ENCODE measurements at regions of chr14 and their contacts with region 1.

Region 1: GRCh38 chr14:32252030-32252670 is 49.1 kb upstream of the RNU6-8 start:
- DNase-seq: peak; percentile 89
- ATAC-seq: peak; percentile 88
- H3K4me3 ChIP-seq: no peak overlapping the region
- H3K27ac ChIP-seq: no peak overlapping the region
- H3K4me1 ChIP-seq: no peaks in the 10 kb centered on the region
- H3K27me3 ChIP-seq: no peaks in the 10 kb centered on the region
- CTCF ChIP-seq: peak; percentile 99
- EP300 ChIP-seq: no peak; a peak in 1 of 4 replicates
- POLR2A ChIP-seq: no peak
- RAD21 ChIP-seq: peak; percentile 97

Region 2: DNA sequence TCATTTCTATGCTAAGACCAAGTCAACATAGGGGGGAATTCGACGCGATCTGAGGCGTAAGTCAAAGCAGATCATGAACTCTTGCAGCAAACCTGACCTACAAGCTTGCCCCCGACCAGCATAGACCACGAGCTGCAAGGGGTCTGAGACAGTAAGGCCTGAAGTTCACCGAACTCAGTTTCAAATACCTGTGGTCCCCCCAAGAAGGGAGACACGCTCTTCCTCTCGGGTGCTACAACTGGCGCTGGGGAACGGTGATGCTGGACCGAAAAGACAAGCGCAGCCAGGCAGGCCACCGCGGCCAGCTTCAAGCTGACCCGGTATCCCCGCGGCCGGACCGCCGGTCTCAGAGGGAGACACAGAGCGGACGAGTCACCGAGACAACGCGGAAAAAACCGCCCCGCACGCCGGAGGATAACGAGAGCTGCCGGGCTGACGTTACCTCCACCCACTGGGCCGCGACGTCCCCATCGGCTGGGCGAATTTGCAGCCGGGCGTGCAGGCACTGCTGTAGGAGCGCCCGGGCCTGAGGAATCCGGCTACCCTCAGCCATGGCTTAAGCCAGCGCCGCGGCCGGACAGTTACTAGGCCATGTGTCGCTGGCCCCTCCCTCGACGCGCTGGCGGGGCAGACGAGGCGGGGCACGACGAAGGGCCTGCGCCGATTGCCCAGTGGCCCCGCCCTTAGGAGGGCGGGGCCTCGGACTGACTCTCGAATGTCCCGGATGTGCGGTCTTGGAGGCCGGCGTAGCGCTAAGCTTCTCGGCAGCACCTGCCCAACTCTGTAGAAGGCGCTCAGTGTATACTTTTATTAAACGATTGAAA is 795.1 kb before region 1 on chr14 and contains the start of gene DTD2:
- CTCF ChIA-PET with region 1: no interaction called
- POLR2A ChIA-PET with region 1: no interaction called
- in situ Hi-C with region 1: no loop called
- intact Hi-C with region 1: loop called (anchors 5 kb)
- DNase-seq: peak; percentile 98
- ATAC-seq: peak; percentile 98
- H3K4me3 ChIP-seq: peak within 1 kb of the TSS; percentile 74 to 88 (median 84)
- H3K27ac ChIP-seq: peak within 1 kb of the TSS; percentile 87
- H3K4me1 ChIP-seq: peaks cover 21% of the 10 kb centered on the region
- H3K27me3 ChIP-seq: no peaks in the 10 kb centered on the region; a peak in 1 of 5 replicates
- CTCF ChIP-seq: no peak
- EP300 ChIP-seq: peak; percentile 22 to 60; a peak in 2 of 4 replicates
- POLR2A ChIP-seq: peak; percentile 98 to 99
- RAD21 ChIP-seq: peak; percentile 79
- total RNA-seq, gene DTD2: 49.8 and 68.8 TPM in 2 replicates

Region 3: DNA sequence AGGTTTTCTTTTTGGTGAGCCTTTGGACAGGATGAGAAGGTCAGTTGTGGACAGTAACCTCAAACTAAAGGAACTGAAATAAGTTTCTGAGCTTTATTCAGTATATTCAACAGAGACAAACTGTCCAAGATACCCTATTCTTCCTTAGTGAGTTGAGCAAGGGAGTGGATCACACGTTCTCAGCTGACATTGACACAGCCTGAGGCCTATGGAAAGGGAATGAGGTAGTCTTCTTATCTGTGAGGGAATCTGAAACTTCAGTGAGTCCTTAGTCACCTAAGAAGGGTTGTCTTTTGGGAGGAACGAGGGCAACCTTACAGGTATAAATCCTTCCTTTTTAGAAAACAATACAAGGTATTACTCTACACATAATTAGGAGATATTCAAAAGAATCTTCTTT is 696.0 kb before region 1 on chr14:
- CTCF ChIA-PET with region 1: no interaction called
- POLR2A ChIA-PET with region 1: no interaction called
- in situ Hi-C with region 1: no loop called
- intact Hi-C with region 1: loop called (anchors 2 kb)
- DNase-seq: no peak
- ATAC-seq: no peak
- H3K4me3 ChIP-seq: no peak overlapping the region
- H3K27ac ChIP-seq: no peak overlapping the region
- H3K4me1 ChIP-seq: peaks cover 28% of the 10 kb centered on the region
- H3K27me3 ChIP-seq: no peaks in the 10 kb centered on the region
- CTCF ChIP-seq: no peak
- EP300 ChIP-seq: no peak
- POLR2A ChIP-seq: no peak
- RAD21 ChIP-seq: no peak

Region 4: DNA sequence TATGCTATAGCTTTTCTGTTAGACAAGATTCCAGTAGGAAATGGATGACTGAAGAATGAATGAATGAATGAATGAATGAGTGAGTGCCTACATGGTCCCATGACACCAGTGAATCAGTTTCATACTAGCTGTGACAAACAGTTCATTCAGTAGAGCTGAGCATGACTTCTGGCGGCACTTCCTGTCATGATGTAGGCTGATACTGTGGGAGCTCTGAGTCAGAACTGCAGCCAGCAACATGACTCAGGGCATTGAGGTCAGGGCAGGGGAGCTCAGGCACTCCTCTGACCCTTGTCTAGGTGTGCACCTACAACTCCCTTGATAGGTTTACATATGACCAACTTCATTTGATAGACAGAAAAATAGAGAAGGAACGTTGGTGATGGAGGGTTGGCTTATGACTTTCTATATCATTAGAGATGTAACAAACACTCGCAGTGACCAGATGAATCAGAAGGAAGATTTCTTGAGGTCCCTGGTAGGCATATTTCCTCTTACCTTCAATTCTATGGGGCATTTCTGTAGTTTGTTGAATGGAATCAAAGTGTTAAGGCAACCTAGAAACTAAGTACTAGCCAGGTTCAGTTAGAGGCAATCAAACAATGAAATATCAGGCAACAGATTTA is 314.3 kb before region 1 on chr14:
- CTCF ChIA-PET with region 1: interaction called, 30 read pairs
- POLR2A ChIA-PET with region 1: no interaction called
- in situ Hi-C with region 1: loop called (anchors 5 kb)
- intact Hi-C with region 1: loop called (anchors 1 kb)
- DNase-seq: peak; percentile 98
- ATAC-seq: peak; percentile 88
- H3K4me3 ChIP-seq: no peak overlapping the region
- H3K27ac ChIP-seq: no peak overlapping the region
- H3K4me1 ChIP-seq: peaks cover 59% of the 10 kb centered on the region
- H3K27me3 ChIP-seq: no peaks in the 10 kb centered on the region
- CTCF ChIP-seq: no peak
- EP300 ChIP-seq: peak; percentile 33 to 84; a peak in 1 of 4 replicates
- POLR2A ChIP-seq: no peak
- RAD21 ChIP-seq: no peak

Region 5: GRCh38 chr14:31992011-31992447 is 260.1 kb before region 1 on chr14:
- CTCF ChIA-PET with region 1: no interaction called
- POLR2A ChIA-PET with region 1: no interaction called
- in situ Hi-C with region 1: no loop called
- intact Hi-C with region 1: no loop called
- DNase-seq: no peak
- ATAC-seq: no peak
- H3K4me3 ChIP-seq: no peak overlapping the region
- H3K27ac ChIP-seq: no peak overlapping the region
- H3K4me1 ChIP-seq: peaks cover 30% of the 10 kb centered on the region
- H3K27me3 ChIP-seq: peaks cover 0 to 11% of the 10 kb centered on the region in 2 experiments; a peak in 2 of 5 replicates
- CTCF ChIP-seq: no peak
- EP300 ChIP-seq: no peak
- POLR2A ChIP-seq: no peak
- RAD21 ChIP-seq: no peak

Region 6: DNA sequence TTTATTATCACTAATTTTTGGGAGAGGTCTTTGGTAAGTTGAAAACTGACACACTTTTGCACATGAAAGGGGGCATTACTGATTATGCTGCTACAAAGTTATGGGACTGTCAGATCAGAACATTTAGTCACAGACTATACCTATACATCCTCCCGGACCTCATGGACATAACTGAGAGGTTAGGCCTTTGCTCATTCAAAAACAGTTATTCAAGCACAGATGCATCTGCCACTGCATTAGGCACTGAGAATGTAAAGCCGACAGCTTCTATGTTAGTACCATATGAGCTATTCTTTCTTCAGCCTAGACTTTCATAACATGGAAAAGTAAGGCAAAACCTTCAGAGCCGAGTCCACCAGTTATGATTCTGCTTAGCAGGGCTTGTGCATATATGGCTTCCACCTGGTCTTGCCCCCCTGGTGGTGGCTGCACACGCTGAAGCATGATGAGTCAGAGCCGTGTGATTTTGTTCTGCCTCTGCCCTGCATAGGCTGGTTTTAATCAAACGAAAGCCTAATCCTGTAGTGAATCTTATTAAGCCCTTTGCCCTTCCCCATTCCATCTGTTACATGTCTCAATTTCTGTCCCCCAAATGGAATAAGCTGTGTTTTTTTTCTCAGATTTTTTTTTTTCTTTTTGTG is 27.3 kb before region 1 on chr14:
- CTCF ChIA-PET with region 1: no interaction called
- POLR2A ChIA-PET with region 1: no interaction called
- in situ Hi-C with region 1: no loop called
- intact Hi-C with region 1: no loop called
- DNase-seq: peak; percentile 68
- ATAC-seq: peak; percentile 99
- H3K4me3 ChIP-seq: no peak overlapping the region
- H3K27ac ChIP-seq: no peak overlapping the region
- H3K4me1 ChIP-seq: peaks cover 6% of the 10 kb centered on the region; the same call in 1 of the 2 replicates
- H3K27me3 ChIP-seq: no peaks in the 10 kb centered on the region
- CTCF ChIP-seq: peak; percentile 64
- EP300 ChIP-seq: no peak
- POLR2A ChIP-seq: no peak
- RAD21 ChIP-seq: peak; percentile 38; the same call in 1 of the 2 replicates

Region 7: GRCh38 chr14:32469388-32470160 is 217.4 kb after region 1 on chr14:
- CTCF ChIA-PET with region 1: interaction called, 5 read pairs
- POLR2A ChIA-PET with region 1: no interaction called
- in situ Hi-C with region 1: no loop called
- intact Hi-C with region 1: loop called (anchors 1 kb)
- DNase-seq: peak; percentile 63
- ATAC-seq: peak; percentile 60
- H3K4me3 ChIP-seq: no peak overlapping the region
- H3K27ac ChIP-seq: no peak overlapping the region
- H3K4me1 ChIP-seq: peaks cover 16% of the 10 kb centered on the region
- H3K27me3 ChIP-seq: no peaks in the 10 kb centered on the region
- CTCF ChIP-seq: peak; percentile 67
- EP300 ChIP-seq: no peak
- POLR2A ChIP-seq: no peak
- RAD21 ChIP-seq: no peak

Measured in HepG2 (cell line).